B cell (primary cell): ENCODE measurements at regions of chr5 and their contacts with region 1.

Region 1: DNA sequence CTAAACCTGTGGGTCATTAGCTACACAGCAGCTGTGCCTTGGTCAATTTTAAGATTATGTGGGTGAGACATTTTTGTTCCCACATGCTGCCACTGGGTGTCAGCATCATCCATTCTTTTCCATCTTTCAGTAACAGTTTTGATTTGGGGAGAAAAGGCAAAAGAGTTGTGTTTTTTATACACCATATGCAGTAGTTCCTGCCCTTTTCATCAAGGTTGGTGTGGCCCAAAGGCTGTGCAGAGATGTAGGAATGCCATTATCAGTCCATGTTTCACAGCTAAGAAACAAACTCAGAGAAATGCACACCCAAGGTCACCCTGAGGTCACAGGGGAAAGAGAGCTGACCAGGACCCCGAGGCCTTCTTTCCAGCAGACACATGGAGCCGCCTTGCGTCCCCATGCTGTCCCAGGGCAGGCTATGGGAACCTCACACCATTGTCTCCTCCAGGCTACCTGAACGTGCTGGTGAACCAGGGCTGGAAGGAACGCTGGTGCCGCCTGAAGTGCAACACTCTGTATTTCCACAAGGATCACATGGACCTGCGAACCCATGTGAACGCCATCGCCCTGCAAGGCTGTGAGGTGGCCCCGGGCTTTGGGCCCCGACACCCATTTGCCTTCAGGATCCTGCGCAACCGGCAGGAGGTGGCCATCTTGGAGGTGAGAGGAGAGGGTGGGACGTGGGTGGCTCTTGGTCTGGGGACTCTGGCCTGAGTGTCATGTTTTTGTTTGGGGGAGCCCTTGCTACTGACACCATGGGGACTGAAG is 27.8 kb upstream of the GRPEL2 start:
- DNase-seq: peak; percentile 57
- ATAC-seq: peak; percentile 36
- H3K4me3 ChIP-seq: no peak overlapping the region
- H3K4me3 Mint-ChIP-seq: no peak overlapping the region
- H3K27ac ChIP-seq: no peak overlapping the region
- H3K27ac Mint-ChIP-seq: no peak overlapping the region
- H3K4me1 ChIP-seq: no peaks in the 10 kb centered on the region
- H3K4me1 Mint-ChIP-seq: no peaks in the 10 kb centered on the region
- H3K27me3 ChIP-seq: no peaks in the 10 kb centered on the region
- H3K27me3 Mint-ChIP-seq: no peaks in the 10 kb centered on the region
- CTCF ChIP-seq: peak; percentile 78

Region 2: GRCh38 chr5:149376104-149376503 is 58.6 kb after region 1 on chr5:
- CTCF ChIA-PET with region 1: interaction called, 134 read pairs
- POLR2A ChIA-PET with region 1: no interaction called
- intact Hi-C with region 1: no loop called
- DNase-seq: no peak
- ATAC-seq: no peak
- H3K4me3 ChIP-seq: no peak overlapping the region
- H3K4me3 Mint-ChIP-seq: no peak overlapping the region
- H3K27ac ChIP-seq: no peak overlapping the region
- H3K27ac Mint-ChIP-seq: no peak overlapping the region
- H3K4me1 ChIP-seq: no peaks in the 10 kb centered on the region
- H3K4me1 Mint-ChIP-seq: peaks cover 4% of the 10 kb centered on the region
- H3K27me3 ChIP-seq: no peaks in the 10 kb centered on the region
- H3K27me3 Mint-ChIP-seq: no peaks in the 10 kb centered on the region
- CTCF ChIP-seq: no peak

Region 3: DNA sequence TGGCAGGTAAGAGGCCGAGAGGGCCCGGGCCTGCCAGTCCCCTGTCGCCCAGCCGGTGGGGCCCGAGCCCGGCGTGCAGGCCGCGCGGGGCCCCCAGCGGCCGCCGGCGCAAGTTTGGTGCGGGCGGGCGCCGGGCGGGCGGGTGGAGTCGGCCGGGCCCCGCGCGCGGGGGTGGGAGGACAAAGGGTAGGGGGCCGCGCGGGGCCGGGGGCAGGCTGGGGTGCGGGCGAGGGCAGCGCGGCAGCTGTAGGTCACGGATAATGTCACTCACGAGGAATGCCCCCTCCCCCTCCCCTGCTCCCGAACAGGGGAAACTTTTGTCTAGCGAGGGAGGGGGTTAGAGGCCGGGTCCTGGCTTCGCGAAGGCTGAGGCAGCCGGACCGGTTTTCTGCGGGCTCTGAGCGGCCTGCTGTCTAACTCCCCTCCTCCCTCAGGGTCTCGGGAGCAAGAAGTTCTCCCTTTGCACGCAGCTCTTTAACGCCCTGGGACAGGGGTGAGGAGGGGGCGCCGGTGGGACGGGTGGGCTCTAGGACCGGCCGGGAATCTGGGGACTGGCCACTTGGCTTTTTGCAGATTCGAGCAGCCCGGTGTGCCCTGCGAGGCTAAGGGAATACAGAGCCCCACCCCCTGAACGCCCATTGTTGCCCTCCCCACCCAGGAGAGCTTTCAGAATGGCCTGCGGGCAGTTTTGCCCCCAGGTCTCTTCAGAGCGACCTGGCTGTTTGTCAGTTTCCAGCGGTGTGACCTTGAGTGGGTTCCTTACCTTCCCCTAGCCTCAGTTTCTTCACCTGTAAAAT is 1169.1 kb after region 1 on chr5:
- CTCF ChIA-PET with region 1: no interaction called
- POLR2A ChIA-PET with region 1: no interaction called
- intact Hi-C with region 1: no loop called
- DNase-seq: peak; percentile 86
- ATAC-seq: peak; percentile 46
- H3K4me3 ChIP-seq: peak overlapping the region; percentile 59 to 91 (median 71)
- H3K4me3 Mint-ChIP-seq: peak overlapping the region; percentile 82
- H3K27ac ChIP-seq: peak overlapping the region; percentile 72 to 73
- H3K27ac Mint-ChIP-seq: peak overlapping the region; percentile 85
- H3K4me1 ChIP-seq: peaks cover 39 to 58% of the 10 kb centered on the region in 2 donors
- H3K4me1 Mint-ChIP-seq: peaks cover 51% of the 10 kb centered on the region
- H3K27me3 ChIP-seq: no peaks in the 10 kb centered on the region
- H3K27me3 Mint-ChIP-seq: no peaks in the 10 kb centered on the region
- CTCF ChIP-seq: no peak

Region 4: DNA sequence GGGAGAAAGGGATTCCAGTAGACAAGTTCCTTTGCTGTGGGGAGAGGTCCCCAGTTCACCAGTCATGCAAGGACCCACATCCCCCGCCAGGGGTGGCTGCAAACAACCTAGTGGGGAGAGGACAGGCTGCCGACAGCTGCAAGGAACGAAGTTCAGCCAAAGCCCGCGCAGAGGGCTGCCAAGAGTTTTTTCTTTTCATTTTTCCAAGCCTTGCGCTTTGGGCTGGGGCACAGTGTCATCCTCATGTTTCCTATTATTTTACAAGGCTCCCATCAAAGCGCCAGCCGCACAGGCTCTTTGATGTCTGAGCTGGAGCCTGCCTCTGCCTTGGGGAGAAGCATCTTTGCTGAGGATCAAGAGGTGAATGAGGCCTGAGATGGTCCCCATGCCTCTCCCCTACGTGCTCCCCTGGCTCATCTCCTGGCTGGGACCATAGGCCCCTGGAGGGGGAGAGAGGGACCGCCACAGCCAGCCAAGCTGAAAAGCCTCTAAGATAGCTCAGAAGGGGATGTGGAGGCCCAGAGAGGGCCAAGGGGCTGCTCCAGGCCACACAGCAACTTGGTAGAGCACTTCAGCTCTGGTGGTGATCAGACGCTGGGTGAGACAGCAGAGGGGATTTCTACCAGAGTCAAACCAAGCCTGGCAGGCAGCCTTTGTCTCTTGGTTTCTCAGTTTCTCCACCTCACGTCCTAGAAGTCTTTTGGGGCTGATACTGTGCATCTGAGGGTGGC is 1272.6 kb after region 1 on chr5:
- CTCF ChIA-PET with region 1: no interaction called
- POLR2A ChIA-PET with region 1: no interaction called
- intact Hi-C with region 1: no loop called
- DNase-seq: no peak
- ATAC-seq: no peak
- H3K4me3 ChIP-seq: no peak overlapping the region
- H3K4me3 Mint-ChIP-seq: no peak overlapping the region
- H3K27ac ChIP-seq: no peak overlapping the region
- H3K27ac Mint-ChIP-seq: no peak overlapping the region
- H3K4me1 ChIP-seq: no peaks in the 10 kb centered on the region
- H3K4me1 Mint-ChIP-seq: no peaks in the 10 kb centered on the region
- H3K27me3 ChIP-seq: peaks cover 0 to 1% (median 0%) of the 10 kb centered on the region in 4 experiments
- H3K27me3 Mint-ChIP-seq: no peaks in the 10 kb centered on the region
- CTCF ChIP-seq: no peak

Region 5: DNA sequence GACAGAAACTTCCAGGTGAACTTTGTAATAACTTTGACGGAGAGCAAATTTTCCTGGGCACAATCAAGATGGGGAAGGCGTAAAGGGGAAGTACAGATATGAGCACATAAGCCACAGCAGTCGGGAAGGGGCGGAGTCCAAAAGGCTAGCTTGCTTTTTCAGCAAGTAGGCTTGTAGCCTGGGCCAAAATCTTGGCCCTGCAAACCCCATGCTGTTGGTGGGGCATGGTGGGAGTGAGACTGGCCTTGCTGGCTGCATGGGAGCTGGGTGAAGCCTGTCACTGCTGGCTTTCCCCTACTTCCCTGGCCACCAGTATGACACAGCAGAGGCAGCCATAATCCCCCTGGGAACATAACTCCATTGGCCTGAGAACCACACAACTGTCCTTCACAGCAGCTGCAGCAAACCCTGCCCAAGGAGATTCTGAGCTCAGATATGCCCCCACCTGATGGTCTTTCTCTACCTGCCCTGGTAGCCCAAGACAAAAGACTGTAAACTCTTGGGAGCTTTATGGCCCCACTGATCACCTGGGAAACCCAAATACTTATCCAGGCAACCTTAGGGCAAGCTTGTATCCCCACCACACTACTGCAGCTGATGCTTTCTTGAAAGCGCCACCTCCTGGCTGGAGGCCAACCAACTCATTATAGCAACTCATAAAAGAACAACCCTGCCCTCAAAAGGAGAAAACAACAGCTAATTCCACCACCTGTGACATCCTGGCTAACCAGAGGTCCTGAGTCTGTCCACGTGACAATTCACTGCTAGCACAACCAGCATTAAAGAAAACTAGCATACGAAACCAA is 1417.3 kb after region 1 on chr5:
- CTCF ChIA-PET with region 1: no interaction called
- POLR2A ChIA-PET with region 1: no interaction called
- intact Hi-C with region 1: no loop called
- DNase-seq: peak; percentile 42
- ATAC-seq: no peak
- H3K4me3 ChIP-seq: peak overlapping the region in 2 of 5 experiments; percentile 2 to 18
- H3K4me3 Mint-ChIP-seq: peak overlapping the region; percentile 51
- H3K27ac ChIP-seq: no peak overlapping the region
- H3K27ac Mint-ChIP-seq: peak overlapping the region; percentile 66
- H3K4me1 ChIP-seq: peaks cover 6 to 8% of the 10 kb centered on the region in 2 donors
- H3K4me1 Mint-ChIP-seq: peaks cover 34% of the 10 kb centered on the region
- H3K27me3 ChIP-seq: no peaks in the 10 kb centered on the region
- H3K27me3 Mint-ChIP-seq: no peaks in the 10 kb centered on the region
- CTCF ChIP-seq: no peak